ENCODE measurements at regions of chr2 and their contacts with region 1.

Region 1: DNA sequence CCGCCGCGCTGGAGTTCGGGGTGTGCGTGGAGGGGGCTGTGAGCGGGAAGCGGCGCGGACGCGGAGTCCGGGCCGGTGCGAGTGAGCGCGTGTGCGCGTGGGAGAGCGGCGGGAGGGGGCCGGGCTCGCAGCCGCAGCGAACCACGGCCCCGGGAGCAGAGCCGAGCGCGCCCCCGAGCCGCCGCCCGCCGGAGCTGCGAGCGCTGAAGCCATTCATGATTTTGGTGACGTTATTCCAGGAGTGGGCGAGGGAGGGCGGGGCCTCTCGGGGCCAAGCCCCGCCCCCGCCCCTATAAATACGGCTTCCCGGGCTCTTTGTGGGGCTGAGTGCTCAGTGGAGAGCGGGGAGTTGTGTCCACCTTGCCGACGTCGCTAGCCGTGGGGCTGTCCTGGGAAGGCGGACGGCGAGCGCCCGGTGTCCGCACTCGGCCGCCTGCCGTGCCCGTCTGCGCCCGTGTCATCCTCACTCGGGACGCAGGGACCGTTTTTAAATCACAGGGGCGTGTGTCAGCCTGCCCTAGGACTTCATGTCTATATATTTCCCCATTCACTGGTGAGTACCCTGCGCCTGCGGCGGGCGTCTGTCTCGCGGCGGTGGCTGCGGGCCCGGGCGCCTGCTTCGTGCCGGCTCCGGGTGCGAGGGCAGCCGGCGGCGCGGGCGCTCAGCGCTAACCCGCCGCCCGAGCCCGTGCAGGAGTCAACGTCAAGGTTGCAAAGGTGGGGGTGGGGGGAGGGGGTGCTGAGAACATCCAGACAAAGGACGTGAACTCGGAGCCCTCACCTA is at the start of gene LBH:
- DNase-seq: peak; percentile 86 to 90
- H3K4me3 ChIP-seq: peak within 1 kb of the TSS; percentile 86
- H3K4me1 ChIP-seq: peaks cover 9% of the 10 kb centered on the region
- H3K27me3 ChIP-seq: no peaks in the 10 kb centered on the region

Region 2: DNA sequence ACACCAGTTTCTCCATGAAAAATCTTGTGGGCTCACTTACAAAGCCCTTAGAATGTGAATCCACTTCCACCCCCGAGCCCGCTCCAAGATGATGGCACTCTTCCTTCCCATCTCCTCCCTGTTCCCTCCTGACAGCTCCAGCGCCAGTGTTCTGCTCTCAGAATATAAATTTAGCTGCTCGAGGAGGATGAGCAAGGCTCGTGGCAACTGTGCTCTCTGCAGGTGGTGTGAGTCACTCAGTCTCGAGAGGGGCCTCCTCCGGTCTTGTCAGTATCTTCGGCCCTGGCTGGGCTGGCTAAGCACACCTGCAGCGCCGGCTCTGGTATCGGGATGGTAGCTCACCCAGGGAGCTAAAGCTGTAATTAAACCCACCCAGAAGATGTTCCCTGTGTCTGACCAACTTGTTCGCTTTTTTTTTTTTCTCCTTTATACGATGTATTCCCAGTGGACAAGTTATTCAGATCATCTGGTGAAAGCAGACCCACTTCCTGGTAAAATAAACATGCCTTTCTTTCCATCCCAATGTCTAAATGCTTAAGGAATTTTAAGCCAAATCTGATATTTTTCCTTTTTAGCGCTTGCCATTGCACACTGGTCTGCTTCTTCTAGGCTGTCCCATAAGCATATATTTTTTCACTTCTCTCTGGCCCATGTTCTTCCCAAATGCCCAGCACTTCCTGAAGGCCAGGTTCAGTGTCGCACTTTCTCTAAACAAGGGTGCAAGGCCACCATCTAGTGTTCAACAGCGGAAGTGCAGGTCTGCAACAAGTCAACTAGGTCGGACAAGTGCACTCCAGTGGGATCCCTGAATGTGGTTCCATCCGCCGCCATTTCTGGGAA is 116.0 kb before region 1 on chr2:
- in situ Hi-C with region 1: no loop called
- DNase-seq: peak; percentile 45 to 88
- H3K4me3 ChIP-seq: no peak overlapping the region
- H3K4me1 ChIP-seq: no peaks in the 10 kb centered on the region
- H3K27me3 ChIP-seq: 0 out of 2 replicates have a peak, but pooled peaks cover 2% of the 10 kb centered on the region

Region 3: GRCh38 chr2:30447149-30448045 is 216.0 kb after region 1 on chr2 and contains the start of gene LCLAT1:
- in situ Hi-C with region 1: loop called (anchors 10 kb)
- DNase-seq: peak; percentile 53 to 82
- H3K4me3 ChIP-seq: peak within 1 kb of the TSS; percentile 95
- H3K4me1 ChIP-seq: peaks cover 20% of the 10 kb centered on the region
- H3K27me3 ChIP-seq: no peaks in the 10 kb centered on the region